ENCODE measurements at regions of chr12 and their contacts with region 1.

Region 1: DNA sequence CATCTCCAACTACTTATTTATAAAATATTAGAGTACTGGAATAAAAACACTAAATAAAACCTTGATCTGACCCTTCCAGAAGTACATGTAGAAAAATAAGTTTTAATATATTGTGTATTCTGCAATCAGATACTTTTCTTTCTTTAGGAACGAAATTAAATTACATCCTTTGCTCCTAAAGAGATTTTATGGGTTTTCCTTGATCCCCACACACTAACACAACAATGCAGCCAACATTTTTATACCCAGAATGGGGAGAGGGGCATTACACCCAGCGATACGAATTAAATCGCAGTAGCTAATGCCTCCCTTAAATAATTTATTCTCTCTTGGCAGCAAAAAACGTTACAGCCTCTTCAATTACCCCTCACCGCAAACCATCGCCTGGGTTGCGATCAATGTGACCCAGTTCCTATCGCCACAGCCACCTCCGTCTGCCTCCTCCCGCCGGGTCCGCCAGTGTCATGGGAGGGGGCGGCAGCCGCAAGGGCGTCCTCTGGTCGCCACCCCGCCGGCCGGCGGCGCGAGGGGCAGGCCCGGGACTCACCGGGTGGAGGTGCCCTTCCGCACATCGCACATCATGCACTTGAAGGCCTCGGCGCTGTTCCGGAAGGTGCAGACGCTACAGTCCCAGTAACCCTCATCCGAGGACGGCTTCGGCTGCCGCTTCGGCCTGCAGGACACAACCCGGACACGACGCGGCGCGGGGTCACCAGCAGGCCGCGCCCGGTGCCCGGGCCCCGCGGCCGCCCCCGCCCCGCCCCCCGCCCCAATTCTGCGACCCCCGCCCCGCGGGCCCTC is 796 bp downstream of the YAF2 start:
- DNase-seq: peak; percentile 69 to 80 (median 75)
- H3K4me3 ChIP-seq: peak overlapping the region; percentile 51 to 92 (median 80)
- H3K4me3 Mint-ChIP-seq: peak overlapping the region; percentile 86 to 94
- H3K27ac ChIP-seq: peak overlapping the region; percentile 33 to 66
- H3K27ac Mint-ChIP-seq: peak overlapping the region; percentile 40 to 92 (median 87)
- H3K4me1 ChIP-seq: peaks cover 10 to 24% of the 10 kb centered on the region in 2 donors
- H3K4me1 Mint-ChIP-seq: peaks cover 30% of the 10 kb centered on the region
- H3K27me3 ChIP-seq: no peaks in the 10 kb centered on the region
- H3K27me3 Mint-ChIP-seq: peaks cover 0 to 5% (median 2%) of the 10 kb centered on the region in 3 donors
- CTCF ChIP-seq: peak; percentile 56

Region 2: GRCh38 chr12:42144408-42145196 is 92.7 kb before region 1 on chr12 and contains the start of gene GXYLT1:
- intact Hi-C with region 1: loop called in 1 of 2 experiments (anchors 10 kb)
- DNase-seq: peak; percentile 90 to 93 (median 92)
- H3K4me3 ChIP-seq: peak within 1 kb of the TSS; percentile 62 to 90 (median 82)
- H3K4me3 Mint-ChIP-seq: peak within 1 kb of the TSS; percentile 97 to 98
- H3K27ac ChIP-seq: peak within 1 kb of the TSS; percentile 32 to 70
- H3K27ac Mint-ChIP-seq: peak within 1 kb of the TSS; percentile 85 to 94 (median 91)
- H3K4me1 ChIP-seq: peaks cover 16 to 34% of the 10 kb centered on the region in 2 donors
- H3K4me1 Mint-ChIP-seq: peaks cover 38% of the 10 kb centered on the region
- H3K27me3 ChIP-seq: no peaks in the 10 kb centered on the region
- H3K27me3 Mint-ChIP-seq: peaks cover 0 to 3% (median 3%) of the 10 kb centered on the region in 3 donors
- CTCF ChIP-seq: no peak
- polyA plus RNA-seq, gene GXYLT1: 2.5 to 7.1 (median 4.9) TPM

Measured in CD14-positive monocyte (primary cell).